ENCODE measurements at regions of chr11 and their contacts with region 1.

Region 1: DNA sequence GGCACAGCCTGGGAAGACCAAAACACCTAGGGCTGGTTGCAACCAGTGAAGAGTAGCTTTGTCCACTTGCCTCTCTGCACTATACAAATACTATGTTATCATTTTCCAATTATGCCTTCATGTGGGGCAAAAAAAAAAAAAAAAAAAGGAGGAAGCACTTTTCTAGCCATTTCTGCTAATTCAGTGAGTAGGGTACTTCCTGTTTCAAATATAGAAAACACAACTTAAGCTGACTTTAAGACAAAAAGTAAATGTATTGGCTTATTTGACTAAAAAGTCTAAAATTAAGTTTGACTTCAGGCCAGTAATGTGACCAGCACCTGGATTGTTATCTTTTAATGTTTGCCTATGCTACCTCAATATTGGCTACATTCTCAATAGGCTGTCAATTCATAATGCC is 15.3 kb downstream of the CCDC73 start:
- DNase-seq: no peak
- H3K4me3 ChIP-seq: no peak overlapping the region
- H3K27ac ChIP-seq: no peak overlapping the region
- H3K4me1 ChIP-seq: no peaks in the 10 kb centered on the region
- H3K27me3 ChIP-seq: no peaks in the 10 kb centered on the region
- CTCF ChIP-seq: no peak
- EP300 ChIP-seq: no peak
- POLR2A ChIP-seq: no peak

Region 2: DNA sequence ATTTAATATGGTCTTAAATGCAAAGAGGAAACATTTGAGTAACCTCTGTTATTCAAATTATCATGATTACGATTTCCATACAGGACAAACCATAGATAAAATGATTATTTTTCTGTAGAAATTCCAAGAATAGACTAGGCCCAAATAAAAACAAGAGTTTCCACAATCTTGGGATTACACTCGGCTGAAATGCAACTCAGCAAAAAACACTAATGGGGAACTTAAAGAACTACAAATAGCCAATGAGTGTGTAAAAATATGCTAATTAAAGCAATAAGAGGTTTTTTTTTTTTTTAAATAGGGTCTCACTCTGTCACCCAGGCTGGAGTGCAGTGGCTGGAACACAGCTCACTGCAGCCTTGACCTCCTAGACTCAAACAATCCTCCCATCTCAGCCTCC is 40.1 kb after region 1 on chr11:
- intact Hi-C with region 1: loop called in 1 of 4 experiments (anchors 1 kb)
- DNase-seq: no peak
- H3K4me3 ChIP-seq: no peak overlapping the region
- H3K27ac ChIP-seq: no peak overlapping the region
- H3K4me1 ChIP-seq: no peaks in the 10 kb centered on the region
- H3K27me3 ChIP-seq: no peaks in the 10 kb centered on the region
- CTCF ChIP-seq: no peak
- EP300 ChIP-seq: no peak
- POLR2A ChIP-seq: no peak

Region 3: DNA sequence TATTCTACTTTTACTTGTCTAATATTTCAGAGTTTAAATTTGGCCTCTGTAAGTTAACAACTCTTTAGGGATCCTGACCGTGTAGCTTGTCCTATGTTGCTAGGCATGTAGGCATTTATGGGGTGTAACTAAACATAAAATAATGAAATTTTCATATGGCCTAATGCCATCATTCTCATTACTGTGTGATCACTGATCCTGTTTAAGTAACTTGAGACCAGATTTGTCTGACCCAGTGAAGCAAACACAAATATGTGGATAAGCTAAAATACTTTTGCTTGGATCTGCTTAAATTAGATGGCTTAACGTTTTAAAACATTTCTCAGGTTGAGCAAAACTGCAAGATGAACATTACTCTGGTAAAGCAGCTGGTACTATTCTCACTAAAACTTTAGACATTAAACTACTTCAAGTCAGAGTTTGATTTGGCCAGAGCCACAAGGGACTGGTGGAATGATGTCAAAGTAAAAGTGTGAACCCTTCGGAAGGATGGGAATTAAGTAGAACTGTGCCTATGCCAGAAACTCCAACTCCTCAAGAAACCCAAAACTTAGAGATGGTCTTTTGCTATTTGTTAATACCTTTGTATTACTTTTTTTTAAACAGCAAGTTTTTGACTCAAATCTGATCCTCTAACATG is 126.0 kb after region 1 on chr11:
- intact Hi-C with region 1: no loop called
- DNase-seq: no peak
- H3K4me3 ChIP-seq: no peak overlapping the region
- H3K27ac ChIP-seq: no peak overlapping the region
- H3K4me1 ChIP-seq: no peaks in the 10 kb centered on the region
- H3K27me3 ChIP-seq: no peaks in the 10 kb centered on the region
- CTCF ChIP-seq: no peak
- EP300 ChIP-seq: no peak
- POLR2A ChIP-seq: no peak

Region 4: GRCh38 chr11:32916361-32916760 is 137.2 kb after region 1 on chr11:
- intact Hi-C with region 1: no loop called
- DNase-seq: no peak
- H3K4me3 ChIP-seq: no peak overlapping the region
- H3K27ac ChIP-seq: no peak overlapping the region
- H3K4me1 ChIP-seq: peaks cover 2% of the 10 kb centered on the region
- H3K27me3 ChIP-seq: no peaks in the 10 kb centered on the region
- CTCF ChIP-seq: no peak
- EP300 ChIP-seq: no peak
- POLR2A ChIP-seq: no peak

Region 5: DNA sequence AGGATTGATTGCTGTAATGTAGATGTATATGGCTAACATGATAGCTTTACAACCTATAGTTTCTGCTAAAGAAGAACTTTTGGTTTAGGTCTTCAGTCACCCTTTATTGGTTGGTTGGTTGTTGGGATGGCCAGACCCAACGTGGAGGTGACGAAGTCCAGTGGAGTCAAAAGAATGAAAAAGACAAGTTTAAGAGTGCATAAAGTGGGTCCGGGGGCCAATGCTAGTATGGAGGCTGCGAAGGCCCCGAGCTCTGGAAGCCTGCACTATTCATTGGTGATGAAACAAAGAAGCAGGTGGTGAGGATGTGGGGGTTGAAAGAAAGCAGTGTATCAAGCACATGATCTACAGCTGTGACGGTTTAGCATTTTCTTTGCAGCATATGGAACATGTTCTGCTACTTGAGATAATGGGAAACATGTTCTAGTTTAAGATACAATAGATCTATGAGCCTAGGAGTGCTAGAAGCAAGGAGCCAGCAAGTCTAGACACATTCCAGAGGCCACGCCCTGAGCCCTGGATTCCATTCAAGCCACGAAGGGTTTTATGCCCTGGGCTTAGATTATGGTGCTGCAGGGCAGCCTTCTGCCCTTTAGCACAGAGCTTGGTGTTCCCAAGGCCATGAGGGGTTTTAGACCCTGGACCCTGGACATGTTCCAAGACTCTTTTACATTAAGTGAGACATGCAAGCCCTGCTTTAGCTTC is 266.6 kb after region 1 on chr11:
- intact Hi-C with region 1: no loop called
- DNase-seq: no peak
- H3K4me3 ChIP-seq: no peak overlapping the region
- H3K27ac ChIP-seq: no peak overlapping the region
- H3K4me1 ChIP-seq: no peaks in the 10 kb centered on the region
- H3K27me3 ChIP-seq: no peaks in the 10 kb centered on the region
- CTCF ChIP-seq: no peak
- EP300 ChIP-seq: no peak
- POLR2A ChIP-seq: no peak